ENCODE measurements at regions of chr17 and their contacts with region 1.

Region 1: DNA sequence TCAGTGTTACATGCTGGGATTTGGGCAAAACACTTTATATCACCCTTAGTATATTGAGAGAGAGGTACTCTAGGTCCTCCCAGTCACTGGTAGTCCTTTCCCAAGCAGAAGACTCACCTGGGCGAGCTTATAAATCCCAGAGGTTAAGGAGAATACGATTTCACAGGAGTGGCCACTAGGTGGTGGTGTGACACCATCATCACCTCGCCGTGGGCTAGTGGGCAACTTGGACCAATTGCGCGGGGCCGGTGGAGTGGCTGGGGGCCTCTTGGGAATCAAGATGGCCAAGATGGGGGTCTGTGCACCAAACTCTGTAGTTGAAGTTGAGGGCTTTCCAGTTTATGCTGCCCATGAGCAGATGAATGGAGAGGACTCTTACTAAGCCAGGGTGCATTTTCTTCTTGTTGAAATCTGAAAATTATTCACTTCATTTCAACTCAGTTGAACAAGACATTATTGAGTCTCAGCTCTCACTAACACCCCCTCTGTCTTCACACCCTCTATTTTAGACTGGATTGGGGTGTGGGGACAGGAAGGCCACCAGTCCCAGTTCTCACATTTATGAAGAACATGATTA is 38.2 kb upstream of the PIRT start:
- DNase-seq: peak in 1 of 2 experiments; percentile 88
- H3K4me3 ChIP-seq: no peak overlapping the region
- H3K27ac ChIP-seq: no peak overlapping the region
- H3K4me1 ChIP-seq: no peaks in the 10 kb centered on the region
- H3K27me3 ChIP-seq: no peaks in the 10 kb centered on the region
- CTCF ChIP-seq: peak; percentile 74 to 83 (median 75)
- EP300 ChIP-seq: no peak
- POLR2A ChIP-seq: no peak
- RAD21 ChIP-seq: peak; percentile 91 to 96

Region 2: DNA sequence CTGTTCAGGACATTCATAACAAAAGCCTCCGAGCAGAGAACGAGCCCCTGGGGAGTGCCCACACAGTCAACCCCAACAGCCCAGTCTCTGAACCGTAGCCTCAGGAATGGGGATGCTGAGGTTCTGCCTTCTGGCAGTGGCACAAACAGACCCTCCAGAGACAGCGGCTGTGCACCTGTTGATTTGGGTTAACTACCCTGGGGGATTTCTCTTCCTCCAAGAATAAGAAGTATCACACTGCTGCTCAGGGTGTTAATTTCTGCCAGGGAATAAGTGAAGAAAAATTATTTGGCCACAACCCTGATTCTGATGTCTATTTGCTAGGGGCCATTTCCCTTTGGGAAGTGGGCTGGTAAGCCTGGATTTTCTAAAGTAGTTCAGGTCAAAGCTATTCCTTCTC is 12.8 kb after region 1 on chr17:
- CTCF ChIA-PET with region 1: interaction called, 13 read pairs
- POLR2A ChIA-PET with region 1: no interaction called
- DNase-seq: no peak
- H3K4me3 ChIP-seq: no peak overlapping the region
- H3K27ac ChIP-seq: no peak overlapping the region
- H3K4me1 ChIP-seq: no peaks in the 10 kb centered on the region
- H3K27me3 ChIP-seq: no peaks in the 10 kb centered on the region
- CTCF ChIP-seq: no peak
- EP300 ChIP-seq: no peak
- POLR2A ChIP-seq: no peak
- RAD21 ChIP-seq: no peak

Region 3: GRCh38 chr17:10976401-10976800 is 100.3 kb after region 1 on chr17:
- CTCF ChIA-PET with region 1: no interaction called
- POLR2A ChIA-PET with region 1: no interaction called
- DNase-seq: no peak
- H3K4me3 ChIP-seq: no peak overlapping the region
- H3K27ac ChIP-seq: no peak overlapping the region
- H3K4me1 ChIP-seq: no peaks in the 10 kb centered on the region
- H3K27me3 ChIP-seq: no peaks in the 10 kb centered on the region
- CTCF ChIP-seq: no peak
- EP300 ChIP-seq: no peak
- POLR2A ChIP-seq: no peak
- RAD21 ChIP-seq: no peak

Measured in H1 (cell line).